AG04450 (cell line): ENCODE measurements at regions of chr7 and their contacts with region 1.

Region 1: DNA sequence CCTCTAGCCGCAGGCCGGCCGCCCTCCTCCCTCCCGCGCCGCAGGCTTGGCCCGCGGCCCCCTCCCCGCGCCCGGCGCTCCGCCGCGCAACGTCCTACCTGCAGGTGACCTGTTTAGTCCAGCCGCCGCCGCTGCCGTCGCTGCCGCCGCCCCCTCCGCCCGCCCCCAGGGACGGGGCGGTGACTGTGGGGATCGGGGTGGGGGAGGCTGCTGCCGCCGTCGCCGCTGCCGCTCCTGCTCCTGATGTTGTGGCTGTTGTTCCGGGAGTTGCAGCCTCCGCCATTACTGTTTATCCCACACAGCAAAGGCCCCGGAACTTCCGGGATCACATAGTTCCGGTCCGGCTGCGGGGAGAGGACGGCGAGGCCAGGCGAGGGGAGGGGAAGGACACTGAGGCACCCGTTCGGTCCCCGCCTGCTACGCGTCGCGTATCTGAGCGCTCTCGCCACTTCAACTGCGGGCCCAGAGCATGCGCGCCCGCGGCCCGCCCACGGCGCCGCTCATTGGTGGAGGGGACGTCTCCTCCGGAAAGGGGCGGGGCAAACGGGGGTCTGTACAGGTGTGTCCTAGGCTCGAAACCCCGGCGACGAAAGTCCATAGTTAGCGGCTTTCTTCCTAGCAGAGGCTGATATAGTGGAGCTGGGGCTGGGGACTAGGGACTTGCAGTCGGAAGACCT is at the start of gene MKRN1:
- DNase-seq: peak; percentile 67
- H3K4me3 ChIP-seq: peak within 1 kb of the TSS; percentile 78
- H3K27ac ChIP-seq: peak within 1 kb of the TSS; percentile 70
- H3K27me3 ChIP-seq: peaks cover 5% of the 10 kb centered on the region
- CTCF ChIP-seq: no peak
- polyA plus RNA-seq, gene MKRN1: 63.7 and 71.6 TPM in 2 replicates

Region 2: GRCh38 chr7:140397784-140398750 is 81.1 kb before region 1 on chr7 and contains the start of gene SLC37A3:
- CTCF ChIA-PET with region 1: no interaction called
- POLR2A ChIA-PET with region 1: no interaction called
- DNase-seq: peak; percentile 20
- H3K4me3 ChIP-seq: peak within 1 kb of the TSS; percentile 70
- H3K27ac ChIP-seq: no peak within 1 kb of the TSS
- H3K27me3 ChIP-seq: no peaks in the 10 kb centered on the region
- CTCF ChIP-seq: peak; percentile 7; the same call in 1 of the 2 replicates
- polyA plus RNA-seq, gene SLC37A3: 52.2 and 61.7 TPM in 2 replicates

Region 3: GRCh38 chr7:140533394-140533872 is 54.2 kb after region 1 on chr7:
- CTCF ChIA-PET with region 1: no interaction called
- POLR2A ChIA-PET with region 1: no interaction called
- DNase-seq: no peak
- H3K4me3 ChIP-seq: no peak overlapping the region
- H3K27ac ChIP-seq: peak overlapping the region; percentile 11
- H3K27me3 ChIP-seq: no peaks in the 10 kb centered on the region
- CTCF ChIP-seq: no peak

Region 4: DNA sequence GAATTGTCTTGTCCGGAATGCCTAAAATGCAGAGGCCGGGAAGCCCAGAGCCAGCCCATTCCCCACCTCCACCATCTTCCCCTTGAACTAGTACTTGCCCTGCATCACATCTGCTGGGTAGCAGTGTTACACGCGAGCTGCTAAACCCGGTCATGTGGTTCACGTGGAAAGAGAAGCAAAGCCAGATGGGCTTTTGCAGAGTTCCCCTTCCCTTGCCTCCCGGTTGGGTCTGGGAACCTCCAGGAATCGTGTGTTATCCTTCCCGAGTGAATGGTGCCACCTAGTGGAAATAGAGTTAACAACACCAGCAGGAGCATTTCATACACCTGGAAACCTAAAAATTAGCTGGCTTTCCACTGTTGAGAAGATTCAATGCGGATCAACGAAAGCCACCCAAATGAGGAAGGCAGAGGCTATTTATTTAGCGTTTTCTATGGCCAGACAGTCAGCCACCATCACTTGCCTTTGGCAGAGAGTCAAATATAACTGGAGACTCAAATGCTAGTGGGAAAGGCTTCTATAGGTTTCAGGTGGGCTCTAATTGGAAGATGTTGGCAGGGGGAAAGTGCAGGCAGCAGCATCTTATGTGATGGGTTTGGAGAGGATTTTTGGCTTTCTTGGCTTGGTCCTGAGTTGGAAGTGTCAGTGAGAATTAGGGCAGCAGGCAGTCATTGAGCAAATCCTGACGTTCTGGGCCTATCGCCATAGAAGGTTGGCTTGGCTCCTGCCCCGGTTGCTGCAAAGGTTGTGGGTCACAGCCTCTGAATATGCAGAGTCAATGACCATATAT is 174.3 kb after region 1 on chr7:
- CTCF ChIA-PET with region 1: interaction called, 44 read pairs
- POLR2A ChIA-PET with region 1: no interaction called
- DNase-seq: peak; percentile 83
- H3K4me3 ChIP-seq: no peak overlapping the region
- H3K27ac ChIP-seq: no peak overlapping the region
- H3K27me3 ChIP-seq: no peaks in the 10 kb centered on the region
- CTCF ChIP-seq: peak; percentile 90